K562 (cell line): ENCODE measurements at regions of chr1 and their contacts with region 1.

Region 1: DNA sequence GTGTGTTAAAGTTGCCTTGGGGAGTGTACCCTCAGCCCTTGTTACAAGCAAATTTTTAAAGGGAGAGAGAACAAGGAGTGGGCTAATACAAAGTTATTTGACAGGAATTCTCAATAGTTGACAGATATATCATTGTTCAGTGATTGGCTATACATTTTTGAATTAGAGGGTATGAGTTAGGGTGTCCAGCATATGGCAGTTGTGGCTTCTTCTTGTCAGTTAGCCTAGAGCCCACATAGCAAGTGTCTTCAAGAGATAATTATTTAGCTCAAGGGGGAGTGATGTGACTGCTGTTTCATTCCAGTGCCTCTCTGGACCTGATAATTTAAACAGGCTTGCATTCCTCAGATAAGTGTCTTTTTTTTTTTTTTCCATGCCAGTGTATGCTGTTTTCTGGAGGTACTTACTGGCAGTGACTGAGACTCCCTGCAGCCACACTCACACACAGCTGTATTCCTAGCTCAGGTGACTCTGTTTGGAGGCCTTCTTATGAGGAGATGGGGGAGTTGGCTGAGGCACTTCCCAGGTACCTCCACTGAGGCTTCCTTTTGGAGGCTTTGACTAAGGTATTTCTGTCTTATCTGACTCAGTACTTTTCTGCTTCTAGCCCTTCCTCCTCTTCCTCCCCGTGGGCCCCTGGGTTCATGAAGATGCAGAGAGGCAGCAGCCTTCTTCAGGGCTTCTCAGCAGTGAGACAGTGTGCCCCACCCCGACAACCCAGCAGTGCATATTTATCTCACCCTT is 32.3 kb downstream of the IVNS1ABP start:
- DNase-seq: peak; percentile 47 to 95 (median 65)
- ATAC-seq: peak; percentile 91
- H3K4me3 ChIP-seq: no peak overlapping the region
- H3K27ac ChIP-seq: peak overlapping the region; percentile 96
- H3K4me1 ChIP-seq: peaks cover 4 to 40% of the 10 kb centered on the region in 2 experiments; a peak in 3 of 5 replicates
- H3K27me3 ChIP-seq: no peaks in the 10 kb centered on the region
- CTCF ChIP-seq: no peak; a peak in 2 of 6 replicates
- EP300 ChIP-seq: peak; percentile 98
- POLR2A ChIP-seq: no peak
- RAD21 ChIP-seq: peak in 1 of 2 experiments; percentile 6; a peak in 2 of 4 replicates

Region 2: GRCh38 chr1:184915463-184916090 is 369.1 kb before region 1 on chr1:
- CTCF ChIA-PET with region 1: no interaction called
- POLR2A ChIA-PET with region 1: no interaction called
- in situ Hi-C with region 1: no loop called
- intact Hi-C with region 1: no loop called
- DNase-seq: no peak
- ATAC-seq: no peak
- H3K4me3 ChIP-seq: no peak overlapping the region
- H3K27ac ChIP-seq: no peak overlapping the region
- H3K4me1 ChIP-seq: peaks cover 3% of the 10 kb centered on the region in 2 experiments; a peak in 4 of 5 replicates
- H3K27me3 ChIP-seq: no peaks in the 10 kb centered on the region
- CTCF ChIP-seq: no peak
- EP300 ChIP-seq: no peak
- POLR2A ChIP-seq: no peak
- RAD21 ChIP-seq: no peak

Region 3: GRCh38 chr1:185096531-185096930 is 188.2 kb before region 1 on chr1:
- CTCF ChIA-PET with region 1: no interaction called
- POLR2A ChIA-PET with region 1: no interaction called
- in situ Hi-C with region 1: no loop called
- intact Hi-C with region 1: no loop called
- DNase-seq: no peak
- ATAC-seq: no peak
- H3K4me3 ChIP-seq: no peak overlapping the region
- H3K27ac ChIP-seq: no peak overlapping the region
- H3K4me1 ChIP-seq: no peaks in the 10 kb centered on the region
- H3K27me3 ChIP-seq: no peaks in the 10 kb centered on the region
- CTCF ChIP-seq: no peak
- EP300 ChIP-seq: no peak
- POLR2A ChIP-seq: no peak
- RAD21 ChIP-seq: no peak

Region 4: DNA sequence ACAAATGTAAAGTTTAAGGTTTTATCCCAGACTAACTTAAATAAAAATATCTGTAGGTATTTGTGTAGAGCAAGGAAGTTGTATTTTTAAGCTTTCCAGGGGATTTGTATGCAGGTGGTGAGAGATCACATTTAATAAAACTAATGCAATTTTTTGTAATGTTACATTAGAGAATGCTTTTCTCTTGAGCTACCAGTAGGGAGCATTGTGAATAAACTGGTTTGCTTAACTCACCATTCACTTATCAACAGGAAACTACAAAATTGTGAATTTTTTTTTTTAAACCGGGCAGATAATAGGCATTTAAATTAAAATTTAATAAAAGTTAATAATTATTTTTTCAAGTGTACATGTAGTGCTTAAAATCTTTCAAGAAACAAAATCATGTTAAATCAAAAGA is 46.3 kb before region 1 on chr1:
- CTCF ChIA-PET with region 1: no interaction called
- POLR2A ChIA-PET with region 1: interaction called, 3 read pairs
- in situ Hi-C with region 1: no loop called
- intact Hi-C with region 1: loop called (anchors 1 kb)
- DNase-seq: peak in 1 of 4 experiments; percentile 22
- ATAC-seq: peak; percentile 82
- H3K4me3 ChIP-seq: no peak overlapping the region
- H3K27ac ChIP-seq: no peak overlapping the region
- H3K4me1 ChIP-seq: peaks cover 0 to 5% of the 10 kb centered on the region in 2 experiments; a peak in 2 of 5 replicates
- H3K27me3 ChIP-seq: no peaks in the 10 kb centered on the region
- CTCF ChIP-seq: peak in 2 of 3 experiments; percentile 33 to 57; a peak in 4 of 6 replicates
- EP300 ChIP-seq: no peak
- POLR2A ChIP-seq: no peak
- RAD21 ChIP-seq: peak; percentile 59 to 68

Region 5: DNA sequence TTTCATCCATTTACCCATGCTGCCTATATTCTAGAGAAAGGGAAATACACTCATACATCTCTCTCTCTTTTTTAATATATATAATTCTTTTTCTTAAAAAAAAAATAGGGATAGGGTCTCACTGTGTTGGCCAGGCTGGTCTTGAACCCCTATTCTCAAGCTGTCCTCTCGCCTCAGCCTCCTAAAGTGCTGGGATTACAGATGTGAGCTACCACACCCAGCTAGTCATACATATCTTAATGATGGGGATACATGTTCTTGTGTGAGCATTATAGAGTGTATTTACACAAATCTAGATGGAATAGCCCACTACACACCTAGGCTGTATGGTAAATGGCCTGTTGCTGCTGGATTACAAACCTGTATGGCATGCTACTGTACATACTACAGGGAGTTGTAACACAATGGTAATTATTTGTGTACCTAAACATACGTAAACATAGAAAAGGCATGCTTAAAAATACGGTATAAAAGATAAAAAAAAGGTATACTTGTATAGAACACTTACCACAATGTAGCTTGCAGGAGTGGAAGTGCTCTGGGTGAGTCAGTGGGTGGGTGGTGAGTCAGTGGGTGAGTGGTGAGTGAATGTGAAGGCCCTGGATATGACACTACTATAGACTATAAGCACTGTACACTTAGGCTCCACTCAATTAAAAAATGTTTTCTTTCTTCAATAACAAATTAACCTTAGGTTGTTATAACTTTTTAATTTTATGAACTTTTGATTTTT is 40.5 kb before region 1 on chr1:
- CTCF ChIA-PET with region 1: no interaction called
- POLR2A ChIA-PET with region 1: interaction called, 4 read pairs
- in situ Hi-C with region 1: no loop called
- intact Hi-C with region 1: loop called (anchors 2 kb)
- DNase-seq: peak in 1 of 4 experiments; percentile 37
- ATAC-seq: peak; percentile 55; the same call in 2 of the 3 replicates
- H3K4me3 ChIP-seq: no peak overlapping the region
- H3K27ac ChIP-seq: no peak overlapping the region
- H3K4me1 ChIP-seq: peaks cover 0 to 16% of the 10 kb centered on the region in 2 experiments; a peak in 3 of 5 replicates
- H3K27me3 ChIP-seq: no peaks in the 10 kb centered on the region
- CTCF ChIP-seq: no peak
- EP300 ChIP-seq: no peak
- POLR2A ChIP-seq: no peak
- RAD21 ChIP-seq: no peak